PC-3 (cell line): ENCODE measurements at regions of chr14 and their contacts with region 1.

Region 1: GRCh38 chr14:61992139-61992538 is 229.9 kb downstream of the SNAPC1 start:
- DNase-seq: peak; percentile 97
- ATAC-seq: peak; percentile 97
- H3K4me3 ChIP-seq: peak overlapping the region; percentile 59
- H3K27ac ChIP-seq: peak overlapping the region; percentile 98
- H3K4me1 ChIP-seq: peaks cover 35% of the 10 kb centered on the region
- H3K27me3 ChIP-seq: no peaks in the 10 kb centered on the region
- CTCF ChIP-seq: no peak

Region 2: DNA sequence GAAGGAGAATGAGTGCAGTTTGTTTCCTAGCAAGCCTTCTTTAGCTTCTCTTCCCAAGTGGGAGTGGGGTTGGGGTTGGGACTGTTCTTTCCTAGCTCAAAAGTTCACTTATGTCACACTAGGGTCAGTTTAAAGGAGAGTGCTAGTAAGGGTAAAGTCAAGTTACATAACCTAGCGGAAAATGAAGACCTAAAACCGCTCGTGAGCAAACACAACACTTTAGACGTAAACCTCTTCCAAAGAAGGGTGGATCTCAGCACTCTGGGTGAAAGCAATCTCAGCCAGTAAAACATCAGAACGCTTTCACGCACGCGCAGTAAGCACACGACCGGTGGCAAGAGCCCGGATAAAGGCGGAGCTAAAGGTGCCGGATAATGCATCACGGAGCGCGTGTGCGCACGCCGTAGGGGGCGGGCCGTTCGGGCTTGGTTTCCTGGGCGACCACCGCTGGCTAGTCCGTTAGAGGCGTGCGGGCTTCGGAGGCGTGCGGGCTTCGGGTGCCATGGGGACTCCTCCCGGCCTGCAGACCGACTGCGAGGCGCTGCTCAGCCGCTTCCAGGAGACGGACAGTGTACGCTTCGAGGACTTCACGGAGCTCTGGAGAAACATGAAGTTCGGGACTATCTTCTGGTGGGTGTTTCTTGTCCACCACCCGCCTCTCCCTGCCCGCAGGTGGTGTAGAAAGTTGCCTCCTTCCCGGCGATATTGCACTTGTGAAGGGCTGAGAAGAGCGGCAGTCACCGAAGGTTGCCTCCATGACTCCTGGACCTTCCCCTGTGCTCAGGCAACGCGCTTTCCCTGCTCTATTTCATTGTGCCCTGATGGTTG is 230.0 kb before region 1 on chr14 and contains the start of gene SNAPC1:
- CTCF ChIA-PET with region 1: no interaction called
- POLR2A ChIA-PET with region 1: interaction called, 3 read pairs
- intact Hi-C with region 1: loop called (anchors 5 kb)
- DNase-seq: peak; percentile 100
- ATAC-seq: peak; percentile 86
- H3K4me3 ChIP-seq: peak within 1 kb of the TSS; percentile 96
- H3K27ac ChIP-seq: peak within 1 kb of the TSS; percentile 55
- H3K4me1 ChIP-seq: peaks cover 32% of the 10 kb centered on the region
- H3K27me3 ChIP-seq: no peaks in the 10 kb centered on the region
- CTCF ChIP-seq: no peak
- total RNA-seq, gene SNAPC1: 26.7 and 27.3 TPM in 2 replicates

Region 3: GRCh38 chr14:61934385-61934784 is 57.8 kb before region 1 on chr14:
- CTCF ChIA-PET with region 1: no interaction called
- POLR2A ChIA-PET with region 1: interaction called, 3 read pairs
- intact Hi-C with region 1: loop called (anchors 1 kb)
- DNase-seq: peak; percentile 98
- ATAC-seq: peak; percentile 92
- H3K4me3 ChIP-seq: no peak overlapping the region
- H3K27ac ChIP-seq: peak overlapping the region; percentile 93
- H3K4me1 ChIP-seq: peaks cover 52% of the 10 kb centered on the region
- H3K27me3 ChIP-seq: no peaks in the 10 kb centered on the region
- CTCF ChIP-seq: no peak

Region 4: GRCh38 chr14:62002642-62003041 is 10.5 kb after region 1 on chr14:
- CTCF ChIA-PET with region 1: no interaction called
- POLR2A ChIA-PET with region 1: interaction called, 3 read pairs
- intact Hi-C with region 1: loop called (anchors 1 kb)
- DNase-seq: peak; percentile 86
- ATAC-seq: peak; percentile 48
- H3K4me3 ChIP-seq: peak overlapping the region; percentile 55
- H3K27ac ChIP-seq: peak overlapping the region; percentile 98
- H3K4me1 ChIP-seq: peaks cover 31% of the 10 kb centered on the region
- H3K27me3 ChIP-seq: no peaks in the 10 kb centered on the region
- CTCF ChIP-seq: no peak

Region 5: DNA sequence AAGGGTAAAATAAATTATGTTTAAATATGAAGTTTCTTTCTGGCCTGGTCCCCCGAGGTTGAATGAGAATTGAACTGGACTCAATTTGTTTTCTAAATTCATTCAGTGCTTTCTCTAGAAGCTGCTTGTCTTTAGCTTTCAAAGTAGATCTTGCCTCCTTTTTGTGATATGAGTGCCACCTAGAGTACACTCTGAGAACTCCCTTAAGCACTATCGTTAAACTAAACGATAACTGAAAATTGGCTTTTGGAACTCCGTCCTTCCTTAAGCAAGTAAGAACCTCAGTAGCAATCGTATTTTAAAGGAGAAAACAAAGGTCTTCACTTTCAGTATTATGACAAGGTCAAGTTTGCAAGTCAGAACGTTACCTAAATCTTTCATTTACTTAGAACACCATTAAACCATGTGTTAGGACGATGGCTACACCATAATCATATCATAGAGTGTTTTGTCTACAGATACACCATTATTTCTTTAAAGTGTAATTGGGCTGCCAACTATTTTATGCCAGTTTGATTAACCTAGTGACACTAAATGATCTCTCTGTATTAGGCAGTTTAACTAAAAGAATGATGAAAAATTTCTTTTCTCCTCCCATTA is 134.8 kb after region 1 on chr14:
- CTCF ChIA-PET with region 1: interaction called, 9 read pairs
- POLR2A ChIA-PET with region 1: interaction called, 3 read pairs
- intact Hi-C with region 1: loop called (anchors 2 kb)
- DNase-seq: peak; percentile 85
- ATAC-seq: peak; percentile 88
- H3K4me3 ChIP-seq: no peak overlapping the region
- H3K27ac ChIP-seq: peak overlapping the region; percentile 15; the same call in 1 of the 2 replicates
- H3K4me1 ChIP-seq: peaks cover 5% of the 10 kb centered on the region; the same call in 1 of the 2 replicates
- H3K27me3 ChIP-seq: no peaks in the 10 kb centered on the region
- CTCF ChIP-seq: peak; percentile 94